ENCODE measurements at regions of chr5 and their contacts with region 1.

Region 1: DNA sequence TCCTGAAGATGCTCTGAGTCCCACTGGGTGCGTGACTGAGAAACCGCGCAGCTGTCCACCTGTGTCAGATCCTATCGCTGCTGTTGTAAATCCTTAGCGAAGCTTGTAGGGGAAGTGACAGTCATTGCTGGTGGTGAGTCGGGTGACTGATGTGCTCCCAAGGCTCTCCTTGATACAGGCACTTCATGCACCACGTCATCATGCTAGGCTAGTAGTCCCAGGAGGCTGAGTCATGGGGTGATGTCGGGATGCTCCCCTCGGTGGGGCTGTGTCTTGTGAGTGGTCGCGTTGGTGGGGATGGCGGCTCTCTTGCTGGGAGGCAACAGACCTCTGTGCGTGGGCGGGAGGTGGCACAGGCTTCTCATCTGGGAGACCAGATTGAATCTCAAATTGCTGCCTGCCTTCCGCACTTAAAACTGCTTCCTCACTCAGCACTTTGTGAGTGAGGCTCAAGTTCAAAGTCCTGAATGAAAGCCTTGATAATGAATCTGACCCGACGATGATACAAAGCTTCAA is 84.7 kb downstream of the CSNK1A1 start:
- DNase-seq: peak in 2 of 3 donors; percentile 44 to 61
- H3K4me3 ChIP-seq: no peak overlapping the region
- H3K27ac ChIP-seq: no peak overlapping the region
- H3K4me1 ChIP-seq: peaks cover 0 to 12% (median 5%) of the 10 kb centered on the region in 4 experiments
- H3K27me3 ChIP-seq: no peaks in the 10 kb centered on the region

Region 2: DNA sequence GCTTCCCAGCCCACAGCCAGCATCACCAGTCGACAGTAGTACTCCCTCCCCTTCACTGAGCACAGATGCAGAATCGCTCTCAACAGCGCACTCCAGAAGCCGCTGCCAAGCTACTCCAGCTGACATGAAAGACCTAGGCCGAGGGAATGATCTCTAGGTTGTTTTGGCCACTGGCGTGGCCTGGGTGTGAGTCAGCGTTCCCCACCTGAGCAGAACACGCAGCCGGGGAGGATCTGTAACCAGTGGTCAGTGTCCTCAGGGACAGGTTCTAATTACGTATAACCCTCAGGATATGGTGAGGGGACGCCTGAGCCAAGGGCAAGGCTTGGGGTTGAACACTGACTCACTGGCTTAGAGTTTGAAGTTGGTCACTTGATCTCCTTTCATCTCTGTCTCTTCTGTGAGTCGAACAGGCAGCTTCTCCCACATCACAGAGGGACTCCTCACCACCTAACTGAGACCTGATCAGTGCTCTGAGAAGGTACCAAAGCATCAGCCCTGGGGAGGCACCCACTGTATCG is 10.6 kb before region 1 on chr5:
- CTCF ChIA-PET with region 1: interaction called, 13 read pairs
- POLR2A ChIA-PET with region 1: no interaction called
- DNase-seq: peak in 1 of 3 donors; percentile 27
- H3K4me3 ChIP-seq: no peak overlapping the region
- H3K27ac ChIP-seq: peak overlapping the region in 1 of 2 experiments; percentile 65
- H3K4me1 ChIP-seq: peaks cover 0 to 18% (median 13%) of the 10 kb centered on the region in 4 experiments
- H3K27me3 ChIP-seq: no peaks in the 10 kb centered on the region

Region 3: DNA sequence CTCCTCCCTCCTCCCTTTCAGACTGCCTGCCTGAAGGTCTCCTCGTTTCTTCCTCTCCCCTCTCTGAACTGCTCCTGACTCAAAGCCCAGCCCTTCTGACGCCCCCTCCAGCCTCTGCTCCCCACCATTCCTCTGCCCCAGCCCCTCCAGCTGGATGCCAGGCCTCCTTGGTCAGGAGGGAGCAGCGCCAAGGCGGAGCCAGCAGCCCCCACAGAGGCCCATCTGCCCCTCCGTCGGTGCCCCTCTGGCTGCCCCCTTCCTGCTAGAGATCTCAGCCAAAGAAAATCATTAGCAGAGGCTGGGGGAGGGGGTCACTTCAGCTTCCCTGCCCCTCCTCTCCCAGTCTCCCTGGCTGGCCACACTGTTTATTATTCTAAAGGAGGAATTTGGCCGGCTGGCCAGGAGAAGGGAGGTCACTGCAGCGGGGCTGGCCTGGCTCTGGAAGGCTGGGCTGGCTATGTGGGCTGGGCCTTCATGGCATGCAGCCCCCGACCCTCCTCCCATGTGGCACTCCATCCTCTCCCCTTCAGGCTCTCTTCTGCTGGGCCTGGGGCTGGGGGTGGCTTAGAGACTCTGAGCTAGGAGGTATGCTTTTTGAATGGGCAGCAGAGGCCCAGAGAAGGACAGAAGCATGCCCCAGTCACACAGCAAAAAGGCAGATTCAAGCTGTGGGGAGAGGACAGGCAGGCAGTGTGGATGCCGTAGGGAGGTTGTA is 672.2 kb after region 1 on chr5:
- CTCF ChIA-PET with region 1: no interaction called
- POLR2A ChIA-PET with region 1: no interaction called
- DNase-seq: no peak
- H3K4me3 ChIP-seq: no peak overlapping the region
- H3K27ac ChIP-seq: no peak overlapping the region
- H3K4me1 ChIP-seq: peaks cover 0 to 17% (median 0%) of the 10 kb centered on the region in 4 experiments
- H3K27me3 ChIP-seq: no peaks in the 10 kb centered on the region

Measured in common myeloid progenitor, CD34-positive (primary cell).